PC-3 (cell line): ENCODE measurements at regions of chr20 and their contacts with region 1.

Region 1: DNA sequence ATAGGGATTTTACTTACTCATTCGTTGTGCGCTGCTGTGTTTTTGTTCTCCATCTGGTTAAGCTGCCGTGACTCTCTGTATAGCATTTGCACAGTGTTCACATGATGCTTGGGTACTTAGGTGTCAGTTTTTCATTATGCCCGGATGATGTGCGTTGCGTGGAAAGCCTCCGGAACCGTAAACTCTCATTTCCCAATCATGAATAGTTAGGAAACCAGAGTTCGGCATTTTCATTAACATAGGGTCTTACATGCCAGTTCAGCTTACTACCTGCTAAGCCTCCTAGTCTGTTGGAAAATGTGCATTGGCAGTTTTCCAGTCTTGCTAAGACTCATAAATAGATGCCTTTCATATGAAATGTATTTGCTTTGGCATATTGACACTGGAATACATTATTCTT is 483.4 kb upstream of the FLRT3 start:
- DNase-seq: peak; percentile 97
- ATAC-seq: peak; percentile 85
- H3K4me3 ChIP-seq: peak overlapping the region; percentile 48; the same call in 1 of the 2 replicates
- H3K27ac ChIP-seq: peak overlapping the region; percentile 71
- H3K4me1 ChIP-seq: peaks cover 25% of the 10 kb centered on the region
- H3K27me3 ChIP-seq: no peaks in the 10 kb centered on the region
- CTCF ChIP-seq: no peak

Region 2: DNA sequence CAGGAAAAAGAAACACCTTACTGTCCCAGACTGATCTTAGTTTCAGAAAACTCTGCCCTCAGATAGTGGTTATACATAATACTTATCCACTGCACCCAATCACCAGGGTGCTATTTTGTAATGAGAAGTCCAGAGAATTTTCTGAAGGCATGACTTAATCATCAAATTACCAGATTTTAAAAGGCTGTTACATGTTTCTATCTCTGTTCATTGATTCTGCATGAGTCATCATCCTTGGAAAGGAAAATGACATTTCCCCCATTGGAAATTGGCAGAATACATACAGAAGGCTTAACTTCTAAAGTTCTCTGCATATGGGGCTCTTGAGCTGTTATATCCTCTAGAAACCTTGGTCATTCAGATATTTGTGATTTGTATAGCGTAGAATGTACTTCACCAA is 104.5 kb after region 1 on chr20:
- CTCF ChIA-PET with region 1: no interaction called
- POLR2A ChIA-PET with region 1: no interaction called
- intact Hi-C with region 1: loop called (anchors 2 kb)
- DNase-seq: peak; percentile 68
- ATAC-seq: peak; percentile 47
- H3K4me3 ChIP-seq: no peak overlapping the region
- H3K27ac ChIP-seq: no peak overlapping the region
- H3K4me1 ChIP-seq: peaks cover 29% of the 10 kb centered on the region
- H3K27me3 ChIP-seq: no peaks in the 10 kb centered on the region
- CTCF ChIP-seq: no peak

Region 3: DNA sequence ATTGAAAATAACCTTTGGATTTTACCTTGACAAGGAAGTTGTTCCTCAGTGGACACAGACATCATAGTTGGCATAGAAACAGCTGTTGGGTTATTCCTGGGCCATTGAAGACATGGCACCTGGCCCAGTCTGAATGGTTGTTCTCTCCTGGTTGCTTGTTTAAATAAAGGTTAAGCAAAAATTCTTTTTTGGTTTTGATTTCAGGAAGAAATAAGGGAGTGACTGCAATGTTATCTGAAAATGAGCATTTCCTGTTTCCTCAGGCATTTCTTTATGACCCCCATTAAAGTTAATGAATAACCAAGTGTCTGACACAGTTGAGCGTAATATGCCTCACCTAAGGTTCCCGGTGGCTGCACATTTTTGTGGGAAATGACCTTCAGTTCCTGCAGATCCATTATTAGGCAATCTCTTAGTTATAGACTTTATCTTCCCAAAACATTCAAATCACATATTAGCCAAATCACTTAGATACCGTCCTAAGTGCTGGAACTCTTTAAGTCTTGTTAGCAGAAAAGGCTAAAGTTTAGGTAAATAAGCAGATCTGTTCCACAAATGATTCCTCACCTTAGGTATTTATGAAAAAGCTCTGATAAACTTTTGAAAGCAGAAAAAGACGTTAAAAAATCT is 165.4 kb after region 1 on chr20:
- CTCF ChIA-PET with region 1: no interaction called
- POLR2A ChIA-PET with region 1: no interaction called
- intact Hi-C with region 1: loop called (anchors 5 kb)
- DNase-seq: peak; percentile 96
- ATAC-seq: peak; percentile 80
- H3K4me3 ChIP-seq: no peak overlapping the region
- H3K27ac ChIP-seq: peak overlapping the region; percentile 91
- H3K4me1 ChIP-seq: peaks cover 33% of the 10 kb centered on the region
- H3K27me3 ChIP-seq: no peaks in the 10 kb centered on the region
- CTCF ChIP-seq: no peak

Region 4: GRCh38 chr20:15278041-15278440 is 457.3 kb after region 1 on chr20:
- CTCF ChIA-PET with region 1: no interaction called
- POLR2A ChIA-PET with region 1: no interaction called
- intact Hi-C with region 1: no loop called
- DNase-seq: peak; percentile 66
- ATAC-seq: peak; percentile 61
- H3K4me3 ChIP-seq: no peak overlapping the region
- H3K27ac ChIP-seq: no peak overlapping the region
- H3K4me1 ChIP-seq: 0 out of 2 replicates have a peak, but pooled peaks cover 6% of the 10 kb centered on the region
- H3K27me3 ChIP-seq: no peaks in the 10 kb centered on the region
- CTCF ChIP-seq: no peak